ENCODE measurements at regions of chr10 and their contacts with region 1.

Region 1: GRCh38 chr10:26407406-26408279 is 30.5 kb upstream of the APBB1IP start:
- DNase-seq: no peak
- ATAC-seq: peak; percentile 21; the same call in 2 of the 3 replicates
- H3K4me3 ChIP-seq: no peak overlapping the region
- H3K27ac ChIP-seq: no peak overlapping the region
- H3K4me1 ChIP-seq: peaks cover 19% of the 10 kb centered on the region
- H3K27me3 ChIP-seq: no peaks in the 10 kb centered on the region
- CTCF ChIP-seq: no peak
- EP300 ChIP-seq: no peak
- POLR2A ChIP-seq: no peak
- RAD21 ChIP-seq: no peak

Region 2: GRCh38 chr10:26423722-26424121 is 16.1 kb after region 1 on chr10:
- CTCF ChIA-PET with region 1: interaction called, 4 read pairs
- POLR2A ChIA-PET with region 1: interaction called, 3 read pairs
- RAD21 ChIA-PET with region 1: interaction called, 6 read pairs
- SMC1A ChIA-PET with region 1: interaction called, 69 read pairs
- in situ Hi-C with region 1: no loop called
- intact Hi-C with region 1: no loop called
- DNase-seq: no peak
- ATAC-seq: no peak
- H3K4me3 ChIP-seq: no peak overlapping the region
- H3K27ac ChIP-seq: no peak overlapping the region
- H3K4me1 ChIP-seq: no peaks in the 10 kb centered on the region
- H3K27me3 ChIP-seq: no peaks in the 10 kb centered on the region
- CTCF ChIP-seq: no peak
- EP300 ChIP-seq: no peak
- POLR2A ChIP-seq: no peak
- RAD21 ChIP-seq: no peak

Region 3: DNA sequence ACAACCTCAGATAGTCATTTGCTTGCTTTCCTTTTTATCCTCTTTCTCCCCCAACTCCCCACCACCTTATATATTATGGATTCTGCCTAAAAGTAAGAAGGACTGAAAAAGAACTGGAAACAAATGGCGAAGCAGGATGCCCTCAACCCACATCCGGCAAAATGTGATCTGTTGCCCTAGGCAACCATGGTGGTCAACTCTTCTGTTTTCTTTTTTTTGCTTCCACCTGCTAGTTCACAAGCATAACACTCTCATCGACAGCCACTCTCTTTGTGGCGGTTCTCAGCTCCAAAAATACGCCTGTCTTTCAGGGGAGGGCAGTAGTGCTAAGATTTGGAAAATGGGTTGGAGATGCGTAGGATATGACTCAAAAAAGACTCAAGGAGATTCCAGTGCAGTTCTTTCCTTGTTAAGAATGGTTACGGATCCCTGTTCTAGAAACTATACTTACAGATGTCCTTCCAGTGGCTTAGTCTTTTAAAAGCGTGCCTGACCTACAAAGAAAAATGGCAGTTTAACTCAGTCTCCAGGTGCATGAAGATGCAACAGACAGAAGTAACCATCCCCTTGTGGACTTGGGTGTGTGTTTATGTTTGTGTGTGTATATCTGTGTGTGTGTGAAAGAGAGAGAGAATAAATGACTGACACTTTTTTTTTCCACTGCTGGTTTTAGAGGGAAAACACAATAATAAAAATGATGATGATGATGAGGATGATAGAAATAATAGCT is 41.2 kb after region 1 on chr10:
- CTCF ChIA-PET with region 1: interaction called, 3 read pairs
- POLR2A ChIA-PET with region 1: interaction called, 3 read pairs
- RAD21 ChIA-PET with region 1: interaction called, 4 read pairs
- SMC1A ChIA-PET with region 1: interaction called, 18 read pairs
- in situ Hi-C with region 1: no loop called
- intact Hi-C with region 1: no loop called
- DNase-seq: peak; percentile 84
- ATAC-seq: peak; percentile 77
- H3K4me3 ChIP-seq: peak overlapping the region; percentile 44; the same call in 1 of the 2 replicates
- H3K27ac ChIP-seq: peak overlapping the region; percentile 84
- H3K4me1 ChIP-seq: peaks cover 26% of the 10 kb centered on the region
- H3K27me3 ChIP-seq: no peaks in the 10 kb centered on the region
- CTCF ChIP-seq: peak in 1 of 3 experiments; percentile 11; a peak in 1 of 6 replicates
- EP300 ChIP-seq: peak in 1 of 2 experiments; percentile 80; a peak in 2 of 4 replicates
- POLR2A ChIP-seq: 0 out of 2 replicates have a peak, but pooled peaks have one; percentile 27
- RAD21 ChIP-seq: peak; percentile 43

Region 4: DNA sequence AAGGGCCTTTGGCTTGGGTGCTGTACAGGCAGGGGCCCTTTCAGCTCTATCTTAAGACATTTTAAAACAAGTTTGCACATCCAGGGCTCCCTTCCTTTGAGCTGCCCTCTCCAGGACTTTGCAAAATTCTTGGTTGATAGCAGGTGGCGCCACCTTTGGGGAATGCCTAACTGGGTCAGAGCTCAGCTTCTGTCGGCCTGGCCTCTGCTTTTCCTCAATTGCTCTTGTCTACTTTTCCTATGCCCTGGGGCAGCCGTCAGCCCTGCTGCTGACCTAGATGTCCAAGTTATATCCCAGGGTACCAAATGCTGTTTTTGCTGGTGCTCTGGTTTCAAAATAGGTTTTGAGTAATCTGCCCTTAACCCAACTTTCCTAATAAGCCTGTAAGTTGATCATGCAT is 96.3 kb after region 1 on chr10:
- CTCF ChIA-PET with region 1: interaction called, 9 read pairs
- POLR2A ChIA-PET with region 1: no interaction called
- RAD21 ChIA-PET with region 1: interaction called, 13 read pairs
- SMC1A ChIA-PET with region 1: interaction called, 11 read pairs
- in situ Hi-C with region 1: no loop called
- intact Hi-C with region 1: no loop called
- DNase-seq: no peak
- ATAC-seq: peak; percentile 64
- H3K4me3 ChIP-seq: no peak overlapping the region
- H3K27ac ChIP-seq: no peak overlapping the region
- H3K4me1 ChIP-seq: no peaks in the 10 kb centered on the region
- H3K27me3 ChIP-seq: no peaks in the 10 kb centered on the region
- CTCF ChIP-seq: peak; percentile 13 to 45 (median 38); a peak in 4 of 6 replicates
- EP300 ChIP-seq: no peak
- POLR2A ChIP-seq: no peak
- RAD21 ChIP-seq: peak; percentile 34; the same call in 1 of the 2 replicates

Measured in GM12878 (cell line).